Activated CD4-positive, alpha-beta T cell treated with anti-CD3 and anti-CD28 coated beads, Interleukin-2, amount 10 ng/mL, durations not matched to agents 24 days and 14 days (primary cell): ENCODE measurements at regions of chr9 and their contacts with region 1.

Region 1: DNA sequence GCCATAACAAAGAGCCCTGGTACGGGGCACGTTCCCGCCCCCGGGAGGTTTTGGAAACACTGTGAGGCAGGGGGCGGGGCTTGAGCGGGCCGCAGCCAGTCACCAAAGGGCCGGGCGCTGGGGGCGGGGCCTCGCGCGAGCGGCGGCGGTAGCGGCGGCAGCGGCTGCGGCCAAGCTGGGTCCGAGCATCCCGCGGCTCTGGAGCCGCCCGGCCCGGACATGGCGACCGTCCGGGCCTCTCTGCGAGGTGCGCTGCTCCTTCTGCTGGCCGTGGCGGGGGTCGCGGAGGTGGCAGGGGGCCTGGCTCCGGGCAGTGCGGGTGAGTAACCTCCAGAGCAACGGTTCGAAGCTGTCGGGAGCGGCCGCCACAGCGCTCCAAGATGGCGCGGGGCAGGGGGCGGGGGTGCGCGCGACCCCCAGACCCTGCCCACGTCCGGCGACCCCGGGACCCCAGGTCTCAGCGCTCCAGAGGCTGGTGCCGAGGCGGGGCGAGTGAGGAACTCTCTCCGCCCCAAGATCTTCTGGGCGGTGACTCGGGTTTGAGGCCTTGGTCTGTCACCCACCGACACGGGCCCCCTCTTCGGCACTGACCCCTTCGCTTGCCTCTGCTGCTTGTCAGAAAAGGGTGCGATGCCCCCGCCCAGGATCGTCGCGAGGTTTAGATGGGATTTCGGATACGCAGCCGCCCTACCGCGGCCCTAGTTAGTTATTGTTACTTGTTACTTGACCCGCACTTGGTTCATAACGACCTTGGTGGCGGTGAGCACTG is at the start of gene RECK:
- DNase-seq: peak; percentile 97
- H3K4me3 Mint-ChIP-seq: peak within 1 kb of the TSS; percentile 97
- H3K27ac Mint-ChIP-seq: peak within 1 kb of the TSS; percentile 89
- H3K4me1 Mint-ChIP-seq: peaks cover 31% of the 10 kb centered on the region
- H3K27me3 Mint-ChIP-seq: peaks cover 15% of the 10 kb centered on the region
- total RNA-seq, gene RECK: 3.9 and 4.3 TPM in 2 replicates

Region 2: DNA sequence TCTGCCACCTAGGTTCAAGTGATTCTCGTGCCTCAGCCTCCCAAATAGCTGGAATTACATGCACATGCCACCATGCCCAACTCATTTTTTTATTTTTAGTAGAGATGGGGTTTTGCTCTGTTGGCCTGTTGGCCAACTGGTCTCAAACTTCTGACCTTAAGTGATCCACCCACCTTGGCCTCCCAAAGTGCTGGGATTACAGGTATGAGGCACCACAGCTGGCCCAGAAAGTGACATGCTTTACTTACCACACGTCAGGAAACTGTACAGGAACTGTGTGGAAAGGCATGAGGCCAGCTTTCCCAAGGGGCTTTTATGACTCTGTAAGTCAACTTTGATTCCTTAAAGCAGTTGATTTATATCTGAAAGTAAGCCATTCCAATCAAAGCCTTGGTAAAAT is 1022.4 kb before region 1 on chr9:
- intact Hi-C with region 1: no loop called
- DNase-seq: no peak
- H3K4me3 Mint-ChIP-seq: no peak overlapping the region
- H3K27ac Mint-ChIP-seq: no peak overlapping the region
- H3K4me1 Mint-ChIP-seq: peaks cover 2% of the 10 kb centered on the region
- H3K27me3 Mint-ChIP-seq: no peaks in the 10 kb centered on the region

Region 3: GRCh38 chr9:35538361-35539234 is 498.4 kb before region 1 on chr9:
- intact Hi-C with region 1: no loop called
- DNase-seq: no peak
- H3K4me3 Mint-ChIP-seq: no peak overlapping the region
- H3K27ac Mint-ChIP-seq: no peak overlapping the region
- H3K4me1 Mint-ChIP-seq: no peaks in the 10 kb centered on the region
- H3K27me3 Mint-ChIP-seq: peaks cover 3% of the 10 kb centered on the region

Region 4: GRCh38 chr9:36051317-36051716 is 14.4 kb after region 1 on chr9:
- intact Hi-C with region 1: loop called (anchors 2 kb)
- DNase-seq: no peak
- H3K4me3 Mint-ChIP-seq: no peak overlapping the region
- H3K27ac Mint-ChIP-seq: no peak overlapping the region
- H3K4me1 Mint-ChIP-seq: peaks cover 2% of the 10 kb centered on the region
- H3K27me3 Mint-ChIP-seq: no peaks in the 10 kb centered on the region

Region 5: GRCh38 chr9:36118706-36119105 is 81.7 kb after region 1 on chr9:
- intact Hi-C with region 1: no loop called
- DNase-seq: no peak
- H3K4me3 Mint-ChIP-seq: no peak overlapping the region
- H3K27ac Mint-ChIP-seq: no peak overlapping the region
- H3K4me1 Mint-ChIP-seq: no peaks in the 10 kb centered on the region
- H3K27me3 Mint-ChIP-seq: no peaks in the 10 kb centered on the region